Adrenal gland (tissue), 19 donors: ENCODE measurements at regions of chr5 and their contacts with region 1.

Region 1: DNA sequence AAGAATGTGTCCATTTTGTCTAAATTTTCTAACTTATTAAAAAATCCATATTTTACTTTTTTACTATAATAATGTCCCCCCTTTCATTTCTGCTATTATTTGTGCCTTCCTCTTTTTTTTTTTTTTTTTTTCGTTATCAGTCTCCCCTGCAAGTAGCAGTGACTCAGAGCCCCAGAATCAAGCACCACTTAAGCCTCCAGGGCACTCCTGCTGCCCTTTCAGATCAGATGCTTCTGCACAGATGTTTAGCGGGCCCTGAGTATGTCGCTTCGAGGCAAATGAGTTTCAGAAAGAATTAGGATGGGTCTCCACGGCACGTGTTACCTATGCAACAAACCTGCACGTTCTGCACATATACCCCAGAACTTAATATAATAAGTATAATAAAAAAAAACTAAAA is 11.7 kb downstream of the MED7 start:
- DNase-seq: peak in 4 of 7 donors; percentile 28 to 49 (median 37)
- H3K4me3 ChIP-seq: no peak overlapping the region
- H3K27ac ChIP-seq: no peak overlapping the region
- H3K4me1 ChIP-seq: peaks cover 4 to 7% of the 10 kb centered on the region in 2 donors
- H3K27me3 ChIP-seq: no peaks in the 10 kb centered on the region
- CTCF ChIP-seq: no peak
- POLR2A ChIP-seq: no peak

Region 2: DNA sequence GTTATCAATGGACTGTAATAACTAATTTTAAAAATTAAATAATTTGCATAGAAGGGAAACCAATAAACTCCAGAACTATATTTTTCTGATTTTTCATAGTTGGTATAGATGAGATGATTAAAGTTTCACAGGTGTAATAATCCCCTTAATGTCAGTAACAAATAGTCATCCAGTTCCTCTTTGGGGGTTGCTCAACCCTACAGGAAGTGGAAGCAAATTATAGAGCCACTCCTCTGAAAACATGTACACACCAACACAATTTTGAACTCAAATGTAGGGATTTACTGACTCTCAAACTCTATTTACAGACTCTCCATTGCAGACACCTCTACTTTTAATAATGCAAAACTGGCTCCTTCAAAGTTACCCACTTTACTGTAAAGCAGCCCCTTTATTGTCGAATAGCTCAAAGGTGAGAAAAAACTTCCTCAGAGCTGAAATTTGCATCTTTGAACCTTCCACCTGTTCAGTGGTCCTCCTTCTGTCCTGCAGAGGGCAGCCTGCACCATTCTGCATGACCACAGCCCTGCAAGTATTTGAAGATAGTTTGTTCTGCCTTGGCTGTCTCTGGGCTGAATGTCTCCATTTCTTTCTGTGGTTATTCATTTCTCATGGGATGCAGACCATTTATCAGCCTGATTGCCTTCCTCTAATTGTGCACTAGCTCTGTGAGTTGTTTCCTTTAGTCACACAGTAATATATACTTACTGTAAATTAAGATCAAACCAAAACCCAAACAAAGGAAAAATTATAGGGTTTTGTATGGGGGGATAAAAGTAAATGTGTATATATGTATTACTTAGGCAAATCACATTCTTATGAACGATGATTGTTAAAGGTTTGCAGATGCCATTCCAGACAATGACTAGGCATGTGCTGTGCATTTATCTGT is 1187.2 kb before region 1 on chr5:
- intact Hi-C with region 1: loop called in 1 of 2 experiments (anchors 10 kb)
- DNase-seq: peak; percentile 41 to 76 (median 66)
- H3K4me3 ChIP-seq: no peak overlapping the region
- H3K27ac ChIP-seq: no peak overlapping the region
- H3K4me1 ChIP-seq: no peaks in the 10 kb centered on the region
- H3K27me3 ChIP-seq: no peaks in the 10 kb centered on the region
- CTCF ChIP-seq: peak; percentile 59 to 72 (median 66)
- POLR2A ChIP-seq: no peak

Region 3: GRCh38 chr5:156991714-156992113 is 139.2 kb before region 1 on chr5:
- intact Hi-C with region 1: no loop called
- DNase-seq: peak in 3 of 7 donors; percentile 10 to 21 (median 14)
- H3K4me3 ChIP-seq: no peak overlapping the region
- H3K27ac ChIP-seq: no peak overlapping the region
- H3K4me1 ChIP-seq: no peaks in the 10 kb centered on the region
- H3K27me3 ChIP-seq: no peaks in the 10 kb centered on the region
- CTCF ChIP-seq: no peak
- POLR2A ChIP-seq: no peak